Posterior cingulate gyrus (tissue), 11 donors: ENCODE measurements at regions of chr1 and their contacts with region 1.

Region 1: DNA sequence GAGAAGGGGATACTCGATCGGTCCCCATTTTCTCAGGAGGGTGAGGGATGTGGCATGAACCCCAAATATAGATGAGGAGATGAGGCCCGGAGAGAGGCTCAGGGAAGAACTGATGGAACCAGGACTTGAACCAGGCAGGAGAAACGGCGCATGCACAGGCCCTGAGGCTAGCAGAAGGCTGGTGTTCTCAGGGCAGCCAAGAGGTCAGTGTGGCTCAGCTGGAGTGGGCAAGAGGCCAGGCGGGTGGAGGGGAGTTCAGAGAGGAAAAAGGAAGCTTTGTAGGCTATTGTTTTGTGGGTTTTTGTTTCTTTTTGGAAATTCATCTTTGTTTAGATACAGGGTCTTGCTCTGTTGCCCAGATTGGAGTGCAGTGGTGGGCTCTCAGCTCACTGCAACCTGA is 122.0 kb downstream of the LACTBL1 start:
- DNase-seq: peak; percentile 60 to 97 (median 82)

Region 2: GRCh38 chr1:22380024-22380785 is 470.5 kb before region 1 on chr1:
- intact Hi-C with region 1: no loop called
- DNase-seq: no peak

Region 3: GRCh38 chr1:22808676-22809483 is 41.8 kb before region 1 on chr1:
- intact Hi-C with region 1: loop called (anchors 10 kb)
- DNase-seq: peak; percentile 42 to 96 (median 68)